ENCODE measurements at regions of chr20 and their contacts with region 1.

Region 1: DNA sequence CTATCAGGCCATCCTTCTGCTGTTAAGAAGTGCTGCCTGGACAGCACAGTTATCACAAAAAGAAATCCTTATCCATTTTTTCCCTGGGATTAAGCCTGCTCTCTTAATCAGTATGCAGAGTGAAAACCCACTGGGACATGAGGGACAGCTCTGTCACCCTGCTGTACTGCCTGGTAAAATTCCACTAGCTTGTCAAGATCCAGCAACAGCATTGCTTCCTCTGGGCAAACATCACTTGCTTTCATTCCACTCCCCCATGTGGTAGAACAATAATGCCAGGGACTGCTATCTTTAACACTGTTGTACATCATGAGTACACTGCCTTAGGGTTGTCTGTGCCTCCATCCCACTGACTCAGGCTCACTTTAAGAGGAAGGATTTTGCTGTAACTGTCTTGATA is 331.3 kb downstream of the KIF16B start:
- DNase-seq: no peak

Region 2: GRCh38 chr20:16125816-16126215 is 116.1 kb before region 1 on chr20:
- intact Hi-C with region 1: no loop called
- DNase-seq: no peak

Region 3: GRCh38 chr20:17985388-17986018 is 1743.6 kb after region 1 on chr20:
- intact Hi-C with region 1: loop called in 1 of 2 experiments (anchors 5 kb)
- DNase-seq: no peak

Measured in posterior vena cava (tissue), 2 donors.